B cell (primary cell): ENCODE measurements at regions of chr6 and their contacts with region 1.

Region 1: DNA sequence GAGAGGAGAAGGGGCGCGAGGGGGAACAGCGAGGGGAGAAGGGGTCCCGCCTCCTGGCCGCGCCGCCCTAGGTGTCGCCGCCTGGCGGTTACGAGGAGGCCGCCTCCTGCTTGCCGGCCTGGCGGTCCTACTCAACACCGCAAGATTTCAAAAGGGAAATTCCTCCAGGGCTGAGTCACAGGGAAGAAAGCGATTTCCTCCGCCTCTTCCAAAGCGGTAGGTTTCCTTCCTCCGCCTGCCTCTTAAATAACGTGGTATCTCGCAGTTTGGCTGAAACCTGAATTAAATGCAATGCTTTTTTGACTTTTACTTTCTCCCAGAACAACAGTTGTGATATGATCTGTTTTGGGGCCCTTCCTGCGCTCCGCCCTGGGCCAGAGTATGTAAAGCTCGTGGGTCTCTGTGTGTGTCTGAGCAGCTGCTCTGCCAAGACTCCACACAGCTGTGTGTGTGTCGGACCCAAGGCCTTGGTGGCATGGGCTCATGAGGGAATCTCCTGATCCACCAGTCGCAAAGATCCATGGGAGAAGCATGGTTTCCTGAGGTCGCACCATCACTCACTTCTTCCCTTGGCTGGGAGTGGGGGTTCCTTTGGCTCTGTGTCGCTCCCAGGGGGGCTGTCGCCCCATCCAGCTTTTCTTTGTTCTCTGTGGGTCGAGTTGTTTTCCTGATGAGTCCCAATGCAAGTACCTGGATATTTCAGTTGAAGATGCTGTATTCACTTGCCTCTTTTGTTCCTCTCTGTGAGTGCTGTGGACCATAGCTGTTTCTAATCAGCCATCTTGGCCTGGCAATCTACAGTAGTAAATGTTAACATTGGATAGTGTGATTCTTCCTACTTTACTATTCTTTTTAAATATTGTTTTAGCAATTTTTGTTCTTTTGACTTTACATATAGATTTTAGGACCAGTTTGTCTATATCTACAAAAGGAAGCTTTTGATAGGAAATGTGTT is 31.6 kb upstream of the NOTCH4 start:
- DNase-seq: peak; percentile 79
- ATAC-seq: peak; percentile 75
- H3K4me3 ChIP-seq: peak overlapping the region in 4 of 5 experiments; percentile 32 to 81 (median 60)
- H3K4me3 Mint-ChIP-seq: peak overlapping the region; percentile 83
- H3K27ac ChIP-seq: peak overlapping the region; percentile 58 to 89
- H3K27ac Mint-ChIP-seq: peak overlapping the region; percentile 90
- H3K4me1 ChIP-seq: peaks cover 25 to 34% of the 10 kb centered on the region in 2 donors
- H3K4me1 Mint-ChIP-seq: peaks cover 72% of the 10 kb centered on the region
- H3K27me3 ChIP-seq: no peaks in the 10 kb centered on the region
- H3K27me3 Mint-ChIP-seq: no peaks in the 10 kb centered on the region
- CTCF ChIP-seq: peak; percentile 73

Region 2: DNA sequence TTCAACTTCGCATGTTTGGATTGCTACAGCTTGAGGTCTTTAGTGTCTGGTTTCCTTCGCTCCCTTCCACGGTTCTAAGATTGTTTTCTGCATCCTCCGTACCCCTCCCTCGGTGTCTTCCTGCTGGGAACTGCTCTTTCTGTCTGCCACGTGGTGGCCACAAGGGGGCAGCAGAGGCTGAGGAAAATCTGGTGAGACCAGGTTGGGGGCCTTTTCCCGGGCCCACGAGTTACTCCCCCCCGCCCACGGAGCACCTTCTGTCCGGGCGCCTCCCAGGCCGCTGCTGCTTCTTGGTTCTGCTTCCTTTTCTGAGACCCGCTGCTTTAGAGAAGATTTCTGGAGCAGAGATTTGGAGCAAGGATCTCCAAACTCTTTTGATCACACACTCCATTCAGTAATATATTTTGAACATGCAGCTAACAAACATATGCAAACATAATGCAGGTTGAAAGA is 10.5 kb before region 1 on chr6:
- CTCF ChIA-PET with region 1: interaction called, 38 read pairs
- POLR2A ChIA-PET with region 1: interaction called, 8 read pairs
- intact Hi-C with region 1: loop called (anchors 1 kb)
- DNase-seq: peak; percentile 87
- ATAC-seq: peak; percentile 93
- H3K4me3 ChIP-seq: peak overlapping the region in 3 of 5 experiments; percentile 8 to 40 (median 24)
- H3K4me3 Mint-ChIP-seq: peak overlapping the region; percentile 76
- H3K27ac ChIP-seq: no peak overlapping the region
- H3K27ac Mint-ChIP-seq: peak overlapping the region; percentile 33
- H3K4me1 ChIP-seq: peaks cover 8 to 16% of the 10 kb centered on the region in 2 donors
- H3K4me1 Mint-ChIP-seq: peaks cover 15% of the 10 kb centered on the region
- H3K27me3 ChIP-seq: no peaks in the 10 kb centered on the region
- H3K27me3 Mint-ChIP-seq: no peaks in the 10 kb centered on the region
- CTCF ChIP-seq: peak; percentile 90

Region 3: GRCh38 chr6:32271429-32271828 is 16.0 kb after region 1 on chr6:
- CTCF ChIA-PET with region 1: interaction called, 23 read pairs
- POLR2A ChIA-PET with region 1: interaction called, 6 read pairs
- intact Hi-C with region 1: loop called (anchors 1 kb)
- DNase-seq: peak; percentile 85
- ATAC-seq: peak; percentile 80
- H3K4me3 ChIP-seq: peak overlapping the region in 1 of 5 experiments; percentile 40
- H3K4me3 Mint-ChIP-seq: peak overlapping the region; percentile 44
- H3K27ac ChIP-seq: peak overlapping the region; percentile 61 to 74
- H3K27ac Mint-ChIP-seq: peak overlapping the region; percentile 81
- H3K4me1 ChIP-seq: peaks cover 62% of the 10 kb centered on the region in 2 donors
- H3K4me1 Mint-ChIP-seq: peaks cover 60% of the 10 kb centered on the region
- H3K27me3 ChIP-seq: no peaks in the 10 kb centered on the region
- H3K27me3 Mint-ChIP-seq: no peaks in the 10 kb centered on the region
- CTCF ChIP-seq: no peak

Region 4: DNA sequence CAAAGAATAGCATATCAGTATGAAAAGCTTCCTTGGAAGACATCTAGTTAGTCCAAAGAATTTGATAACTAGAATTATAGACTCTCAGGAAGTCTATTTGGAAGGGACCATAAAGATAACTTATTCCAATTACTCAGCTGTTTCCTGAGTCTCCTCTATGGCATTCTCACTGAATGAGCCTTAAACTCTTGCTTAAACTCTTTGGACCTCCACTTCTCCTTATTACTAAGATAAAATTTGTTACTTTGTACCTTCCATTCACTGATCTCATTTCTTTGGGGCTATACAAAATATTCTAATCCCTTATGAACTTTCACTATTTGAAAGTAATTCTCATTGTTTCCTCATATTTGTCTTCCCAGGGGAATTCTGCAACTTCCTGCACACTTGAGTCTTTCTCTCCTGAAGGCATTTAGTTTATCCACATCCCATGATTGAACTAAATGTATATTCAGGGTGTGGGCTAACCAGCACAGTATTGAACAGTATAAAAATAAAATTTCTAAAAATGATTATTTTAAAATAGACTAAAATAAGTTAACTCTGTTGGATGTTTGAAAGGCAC is 35.5 kb after region 1 on chr6:
- CTCF ChIA-PET with region 1: interaction called, 5 read pairs
- POLR2A ChIA-PET with region 1: interaction called, 3 read pairs
- intact Hi-C with region 1: loop called (anchors 2 kb)
- DNase-seq: no peak
- ATAC-seq: no peak
- H3K4me3 ChIP-seq: no peak overlapping the region
- H3K4me3 Mint-ChIP-seq: no peak overlapping the region
- H3K27ac ChIP-seq: no peak overlapping the region
- H3K27ac Mint-ChIP-seq: peak overlapping the region; percentile 21
- H3K4me1 ChIP-seq: peaks cover 5 to 8% of the 10 kb centered on the region in 2 donors
- H3K4me1 Mint-ChIP-seq: peaks cover 36% of the 10 kb centered on the region
- H3K27me3 ChIP-seq: no peaks in the 10 kb centered on the region
- H3K27me3 Mint-ChIP-seq: no peaks in the 10 kb centered on the region
- CTCF ChIP-seq: no peak

Region 5: GRCh38 chr6:32337186-32337805 is 81.8 kb after region 1 on chr6:
- CTCF ChIA-PET with region 1: interaction called, 3 read pairs
- POLR2A ChIA-PET with region 1: interaction called, 3 read pairs
- intact Hi-C with region 1: loop called (anchors 5 kb)
- DNase-seq: peak; percentile 10
- ATAC-seq: no peak
- H3K4me3 ChIP-seq: no peak overlapping the region
- H3K4me3 Mint-ChIP-seq: no peak overlapping the region
- H3K27ac ChIP-seq: no peak overlapping the region
- H3K27ac Mint-ChIP-seq: no peak overlapping the region
- H3K4me1 ChIP-seq: peaks cover 2 to 7% of the 10 kb centered on the region in 2 donors
- H3K4me1 Mint-ChIP-seq: peaks cover 33% of the 10 kb centered on the region
- H3K27me3 ChIP-seq: no peaks in the 10 kb centered on the region
- H3K27me3 Mint-ChIP-seq: no peaks in the 10 kb centered on the region
- CTCF ChIP-seq: no peak

Region 6: DNA sequence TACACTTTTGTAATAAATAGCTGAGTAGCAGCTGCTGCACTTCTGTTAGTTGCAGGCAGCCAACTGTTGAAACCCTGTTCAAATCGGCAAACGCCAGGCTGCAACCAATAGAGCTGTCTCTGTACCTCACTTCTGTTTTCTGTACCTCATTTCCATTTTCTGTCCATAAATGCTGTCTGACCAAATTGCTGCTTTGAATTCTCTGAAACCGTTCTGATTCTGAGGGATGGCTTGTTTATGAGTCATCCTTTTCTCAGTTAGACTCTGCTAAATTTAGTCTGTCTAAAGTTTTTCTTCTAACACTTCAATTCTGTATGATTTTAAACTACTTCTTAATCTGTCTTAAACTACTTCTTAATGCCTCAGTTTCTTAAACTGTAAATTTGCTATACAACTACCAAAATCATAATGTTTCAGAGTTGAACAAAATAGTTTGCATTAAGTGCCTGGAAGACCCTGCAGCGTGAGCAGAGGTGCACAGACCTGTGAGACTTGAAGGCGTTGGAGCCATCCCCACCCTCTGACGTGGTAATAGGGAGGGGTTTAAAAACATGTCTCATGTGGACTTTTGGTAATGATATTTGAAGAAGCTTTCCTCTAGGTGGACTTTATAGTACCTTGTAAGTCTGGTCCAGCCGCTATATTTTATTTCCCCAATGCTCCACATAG is 141.9 kb after region 1 on chr6:
- CTCF ChIA-PET with region 1: interaction called, 15 read pairs
- POLR2A ChIA-PET with region 1: no interaction called
- intact Hi-C with region 1: loop called (anchors 5 kb)
- DNase-seq: peak; percentile 51
- ATAC-seq: peak; percentile 84
- H3K4me3 ChIP-seq: no peak overlapping the region
- H3K4me3 Mint-ChIP-seq: peak overlapping the region; percentile 64
- H3K27ac ChIP-seq: peak overlapping the region in 1 of 2 donors; percentile 18
- H3K27ac Mint-ChIP-seq: peak overlapping the region; percentile 86
- H3K4me1 ChIP-seq: peaks cover 0 to 13% of the 10 kb centered on the region in 2 donors
- H3K4me1 Mint-ChIP-seq: peaks cover 16% of the 10 kb centered on the region
- H3K27me3 ChIP-seq: no peaks in the 10 kb centered on the region
- H3K27me3 Mint-ChIP-seq: no peaks in the 10 kb centered on the region
- CTCF ChIP-seq: no peak